Endothelial cell of umbilical vein (primary cell): ENCODE measurements at regions of chr3 and their contacts with region 1.

Region 1: DNA sequence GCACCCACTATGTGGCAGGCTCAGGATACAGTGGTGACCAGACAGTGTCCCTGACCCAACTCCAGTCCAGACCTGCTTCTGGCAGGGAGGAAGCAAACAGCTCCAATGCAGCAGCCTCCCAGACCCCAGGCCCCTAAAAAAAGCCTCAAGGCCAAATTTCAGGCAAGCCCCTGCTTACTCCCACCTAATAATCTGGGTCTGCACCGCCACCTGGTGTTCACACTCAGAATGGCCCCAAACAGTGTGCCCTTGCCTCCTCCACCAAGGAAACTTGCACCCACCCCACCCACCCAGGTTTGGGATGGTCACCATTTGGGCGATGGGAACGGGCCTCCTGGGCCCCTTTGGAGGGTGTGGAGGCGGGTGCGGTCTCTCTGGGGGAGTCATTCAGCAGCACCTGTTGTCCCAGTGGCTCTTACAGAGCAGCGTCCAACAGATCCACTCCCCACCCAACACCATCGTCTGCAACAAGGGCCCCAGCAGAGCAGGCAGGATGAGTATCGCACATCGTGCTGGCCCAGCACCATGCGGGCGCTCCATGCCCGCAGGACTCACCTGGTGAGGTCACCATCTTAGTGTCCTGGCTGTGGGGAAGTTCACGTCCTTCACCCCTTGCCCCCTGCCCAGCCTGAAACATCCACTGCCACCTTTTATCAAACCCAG is 17.3 kb downstream of the C3orf18 start:
- DNase-seq: peak; percentile 52
- H3K4me3 ChIP-seq: no peak overlapping the region
- H3K27ac ChIP-seq: no peak overlapping the region
- H3K4me1 ChIP-seq: no peaks in the 10 kb centered on the region
- H3K27me3 ChIP-seq: no peaks in the 10 kb centered on the region
- CTCF ChIP-seq: peak; percentile 49 to 77
- POLR2A ChIP-seq: no peak

Region 2: GRCh38 chr3:50350527-50351322 is 199.5 kb before region 1 on chr3 and contains the starts of genes CYB561D2 and NPRL2:
- CTCF ChIA-PET with region 1: interaction called, 10 read pairs
- POLR2A ChIA-PET with region 1: no interaction called
- dilution Hi-C with region 1: no loop called
- intact Hi-C with region 1: loop called (anchors 1 kb)
- DNase-seq: peak; percentile 95
- H3K4me3 ChIP-seq: peak within 1 kb of the TSS; percentile 19 to 77 (median 40)
- H3K27ac ChIP-seq: no peak within 1 kb of the TSS
- H3K4me1 ChIP-seq: peaks cover 16% of the 10 kb centered on the region
- H3K27me3 ChIP-seq: no peaks in the 10 kb centered on the region
- CTCF ChIP-seq: no peak
- POLR2A ChIP-seq: peak; percentile 80
- total RNA-seq, gene CYB561D2: 13.6 and 16.3 TPM in 2 replicates
- total RNA-seq, gene NPRL2: 13.4 and 14.5 TPM in 2 replicates

Region 3: DNA sequence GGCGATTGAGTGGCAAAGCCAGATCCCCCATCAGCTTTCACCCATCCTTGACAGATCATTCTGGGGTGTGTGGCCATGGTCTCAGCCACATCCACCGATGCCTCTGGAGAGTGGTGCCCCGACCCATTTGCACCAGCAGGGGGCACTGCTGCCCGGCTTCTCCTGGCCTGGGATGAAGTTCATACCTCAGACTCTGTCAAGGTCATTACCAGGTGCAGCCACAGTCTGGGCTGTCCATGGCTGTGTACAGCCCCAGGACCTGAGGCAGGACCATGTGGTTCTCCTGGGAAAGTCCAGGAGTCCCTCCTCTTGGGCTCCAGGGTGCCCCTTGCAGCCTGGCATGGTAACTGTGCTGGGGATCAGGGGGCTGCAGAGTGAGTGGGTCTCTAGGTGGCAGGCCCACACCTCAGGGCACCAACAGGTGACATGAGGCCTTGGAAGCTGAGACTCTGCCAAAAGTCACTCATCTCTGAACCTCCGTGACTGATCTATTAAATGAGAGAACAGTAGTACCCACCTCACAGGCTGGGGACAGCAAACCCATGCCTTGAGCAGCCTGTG is 114.0 kb before region 1 on chr3:
- CTCF ChIA-PET with region 1: interaction called, 10 read pairs
- POLR2A ChIA-PET with region 1: no interaction called
- dilution Hi-C with region 1: no loop called
- intact Hi-C with region 1: loop called (anchors 1 kb)
- DNase-seq: peak; percentile 42
- H3K4me3 ChIP-seq: no peak overlapping the region
- H3K27ac ChIP-seq: no peak overlapping the region
- H3K4me1 ChIP-seq: no peaks in the 10 kb centered on the region
- H3K27me3 ChIP-seq: no peaks in the 10 kb centered on the region
- CTCF ChIP-seq: peak; percentile 80 to 89
- POLR2A ChIP-seq: no peak

Region 4: GRCh38 chr3:50519471-50520089 is 30.6 kb before region 1 on chr3:
- CTCF ChIA-PET with region 1: interaction called, 4 read pairs
- POLR2A ChIA-PET with region 1: no interaction called
- dilution Hi-C with region 1: no loop called
- intact Hi-C with region 1: loop called (anchors 2 kb)
- DNase-seq: peak; percentile 27
- H3K4me3 ChIP-seq: no peak overlapping the region
- H3K27ac ChIP-seq: no peak overlapping the region
- H3K4me1 ChIP-seq: peaks cover 5% of the 10 kb centered on the region
- H3K27me3 ChIP-seq: peaks cover 0 to under 1% of the 10 kb centered on the region in 2 experiments
- CTCF ChIP-seq: peak; percentile 76 to 88
- POLR2A ChIP-seq: no peak